ENCODE measurements at regions of chr12 and their contacts with region 1.

Region 1: DNA sequence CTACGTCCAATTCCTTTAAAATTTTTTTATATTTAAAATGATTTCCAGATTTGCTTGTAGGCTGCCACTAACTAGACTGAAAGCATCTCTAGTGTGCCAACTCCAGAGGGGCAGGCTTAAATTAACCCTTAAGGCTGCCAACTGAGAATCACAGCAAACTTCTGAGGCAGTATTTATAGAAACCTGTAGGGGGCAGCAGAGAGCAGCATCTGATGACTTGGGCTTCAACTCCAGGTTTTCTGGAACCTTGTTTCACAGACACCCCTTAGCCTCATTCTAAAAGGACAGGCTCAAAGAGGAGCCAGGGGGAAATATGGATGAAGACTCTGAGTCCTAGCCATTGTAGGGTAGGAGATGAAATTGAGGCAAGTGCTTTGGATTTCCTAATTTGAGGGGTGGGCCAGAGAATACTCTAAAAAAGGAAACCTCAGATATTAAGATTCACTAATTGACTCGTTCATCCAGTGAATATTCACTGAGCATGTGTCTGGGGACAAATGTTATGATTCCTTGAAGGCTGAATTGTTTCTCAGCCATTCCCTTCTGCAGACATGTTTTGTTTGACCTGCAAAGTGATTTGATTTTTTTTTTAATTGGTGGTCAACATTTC is 63.3 kb upstream of the HSPB8 start:
- H3K4me3 Mint-ChIP-seq: no peak overlapping the region
- H3K27ac Mint-ChIP-seq: no peak overlapping the region
- H3K4me1 Mint-ChIP-seq: no peaks in the 10 kb centered on the region
- H3K27me3 Mint-ChIP-seq: no peaks in the 10 kb centered on the region

Region 2: DNA sequence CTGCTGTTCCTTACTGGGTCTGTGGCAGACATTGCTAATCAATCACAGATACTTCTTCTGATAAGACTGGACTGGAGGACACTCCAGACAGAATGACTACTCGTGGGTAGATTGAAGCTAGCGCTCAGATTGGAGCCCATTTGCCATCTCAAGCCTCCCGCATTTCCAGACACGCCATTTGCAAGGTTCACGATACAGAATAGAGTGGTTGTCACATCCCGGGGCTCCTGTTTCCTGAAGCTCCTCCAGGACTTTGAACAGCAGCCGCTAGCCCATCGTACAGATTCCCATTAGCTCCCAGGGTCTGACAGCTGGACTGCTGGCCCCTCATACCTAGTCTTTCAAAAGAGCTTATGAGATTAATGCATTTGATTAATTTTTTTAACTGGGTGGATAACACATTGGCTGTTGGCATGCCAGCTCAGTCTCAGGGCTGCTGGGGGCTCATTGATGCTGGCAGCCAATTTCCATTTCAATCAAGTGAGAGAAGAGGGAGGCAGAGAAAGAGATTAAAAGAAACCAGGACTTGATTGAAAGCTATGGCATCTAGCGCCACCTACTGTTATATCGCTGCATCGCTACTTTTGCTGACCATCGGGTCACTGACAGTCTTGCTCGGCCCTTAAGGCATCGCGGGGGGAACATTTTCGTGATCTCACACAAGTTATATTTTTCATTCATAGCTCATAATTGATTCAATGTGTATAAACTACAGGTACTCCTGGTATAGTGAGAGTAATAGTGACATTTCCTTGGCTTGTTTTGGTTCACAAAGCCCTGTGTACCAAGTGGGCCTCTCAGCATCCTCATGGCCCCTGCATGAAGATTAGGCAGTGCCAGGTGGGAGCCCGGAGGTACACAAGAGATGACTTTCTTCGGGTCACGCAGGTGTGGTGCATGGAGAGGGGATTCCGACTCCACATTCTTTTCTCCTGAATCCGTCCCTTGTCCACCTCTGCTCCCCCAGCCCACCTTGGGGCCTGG is 297.7 kb after region 1 on chr12:
- intact Hi-C with region 1: loop called (anchors 2 kb)
- H3K4me3 Mint-ChIP-seq: no peak overlapping the region
- H3K27ac Mint-ChIP-seq: no peak overlapping the region
- H3K4me1 Mint-ChIP-seq: no peaks in the 10 kb centered on the region
- H3K27me3 Mint-ChIP-seq: peaks cover 5% of the 10 kb centered on the region

Region 3: DNA sequence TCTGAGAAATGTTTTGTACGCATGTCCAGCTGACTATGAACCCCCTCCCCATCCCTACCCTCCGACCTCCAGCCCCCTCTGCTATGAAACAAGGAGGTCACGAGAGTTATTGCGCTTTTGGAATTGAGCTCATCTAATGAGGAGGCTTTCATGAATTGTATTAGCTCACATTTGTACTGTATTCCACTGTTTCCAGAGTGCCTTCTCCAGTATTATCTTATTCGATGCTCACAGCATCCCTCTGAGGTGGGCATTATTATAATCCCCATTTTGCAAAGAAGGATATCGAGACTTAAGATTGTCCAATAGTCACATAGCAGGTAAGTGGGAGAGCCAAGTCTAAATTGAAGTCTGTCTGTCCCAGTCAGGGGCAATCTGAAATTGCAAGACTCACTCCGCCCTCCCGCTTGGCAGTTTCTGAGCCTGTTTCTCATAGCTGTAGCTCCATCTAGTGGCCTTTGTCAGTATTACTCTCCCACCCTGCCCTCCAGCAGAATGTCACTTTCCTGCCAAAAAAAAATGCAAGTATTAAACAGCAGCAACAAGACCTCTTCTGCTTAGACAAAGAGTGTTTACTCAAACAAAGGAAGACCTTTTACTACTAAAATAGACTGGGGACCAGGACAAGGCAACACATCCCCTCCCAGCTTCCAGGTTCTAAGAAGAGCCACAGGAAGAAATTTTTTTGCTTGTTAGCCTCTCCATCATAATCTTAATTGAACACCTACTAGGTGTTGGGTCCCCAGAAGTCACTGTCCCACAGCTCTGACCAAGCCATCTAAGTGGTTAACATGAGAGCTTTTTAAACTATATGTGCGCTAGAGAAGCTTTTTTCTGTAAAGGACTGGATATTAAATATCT is 429.6 kb after region 1 on chr12:
- intact Hi-C with region 1: loop called (anchors 10 kb)
- H3K4me3 Mint-ChIP-seq: no peak overlapping the region
- H3K27ac Mint-ChIP-seq: no peak overlapping the region
- H3K4me1 Mint-ChIP-seq: no peaks in the 10 kb centered on the region
- H3K27me3 Mint-ChIP-seq: peaks cover 3% of the 10 kb centered on the region

Measured in dendritic cell treated with granulocyte-macrophage colony-stimulating factor and Interleukin-4, amounts not matched to agents 40 ng/mL and 50 ng/mL, for 4 days (primary cell).